Head of caudate nucleus (tissue), 42 donors: ENCODE measurements at regions of chr9 and their contacts with region 1.

Region 1: GRCh38 chr9:5389109-5389732 is 48.5 kb downstream of the PLGRKT start:
- DNase-seq: no peak

Region 2: DNA sequence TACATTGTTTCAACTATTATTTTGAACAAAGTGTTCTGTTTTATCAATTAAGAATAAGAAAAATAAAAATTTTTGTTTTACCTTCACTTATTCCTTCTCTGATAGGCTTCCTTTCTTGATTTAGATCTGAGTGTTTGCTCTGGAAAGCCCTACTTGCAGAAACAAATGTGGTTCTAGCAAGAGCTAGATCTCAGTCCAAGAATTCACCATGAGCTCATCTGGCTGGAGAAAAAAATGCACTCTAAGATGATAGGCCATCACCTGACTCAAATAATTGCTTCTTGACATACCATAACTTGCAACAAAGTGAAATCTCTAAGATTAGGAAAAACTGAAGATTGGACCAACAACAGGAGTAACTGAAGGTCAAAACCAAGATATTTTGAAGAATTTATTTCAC is 78.4 kb before region 1 on chr9:
- intact Hi-C with region 1: loop called (anchors 10 kb)
- DNase-seq: no peak

Region 3: GRCh38 chr9:5459289-5459829 is 70.1 kb after region 1 on chr9:
- intact Hi-C with region 1: no loop called
- DNase-seq: peak in 9 of 42 donors; percentile 11 to 55 (median 28)